B cell (primary cell): ENCODE measurements at regions of chr2 and their contacts with region 1.

Region 1: DNA sequence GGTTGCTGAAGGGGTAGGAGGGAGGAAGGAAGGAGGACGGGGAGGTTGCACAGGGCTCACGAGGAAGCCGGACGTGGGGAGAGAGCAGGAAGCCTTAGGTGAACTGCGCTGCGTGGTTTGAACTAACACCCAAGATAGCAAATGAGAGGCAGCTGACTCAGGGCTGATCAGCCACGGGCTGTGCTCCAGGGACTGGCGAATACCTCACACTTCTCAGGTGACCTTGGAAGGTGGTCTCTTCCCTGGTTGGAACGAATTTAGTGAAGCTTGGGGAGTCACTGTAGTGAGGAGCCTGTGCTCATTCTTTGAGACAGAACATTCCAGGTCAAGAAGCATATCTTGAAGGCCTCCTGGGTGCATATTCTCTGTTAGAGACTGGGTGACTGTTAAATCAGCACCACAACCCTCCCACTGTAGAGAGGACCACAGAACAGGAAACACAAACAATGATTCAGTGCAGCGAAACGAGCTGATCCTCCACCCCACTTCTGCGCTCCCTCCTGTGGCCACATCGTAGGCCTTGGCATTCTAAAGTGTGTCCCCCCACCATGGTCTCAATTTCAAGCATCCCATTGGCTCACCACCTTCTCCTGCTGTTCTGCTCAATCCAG is 33.8 kb downstream of the TOGARAM2 start:
- DNase-seq: peak; percentile 62
- ATAC-seq: peak; percentile 56
- H3K4me3 ChIP-seq: peak overlapping the region in 4 of 5 experiments; percentile 2 to 36 (median 10)
- H3K4me3 Mint-ChIP-seq: peak overlapping the region; percentile 38
- H3K27ac ChIP-seq: peak overlapping the region in 1 of 2 donors; percentile 64
- H3K27ac Mint-ChIP-seq: peak overlapping the region; percentile 80
- H3K4me1 ChIP-seq: peaks cover 31 to 53% of the 10 kb centered on the region in 2 donors
- H3K4me1 Mint-ChIP-seq: peaks cover 58% of the 10 kb centered on the region
- H3K27me3 ChIP-seq: peaks cover 0 to 22% (median 0%) of the 10 kb centered on the region in 4 experiments
- H3K27me3 Mint-ChIP-seq: peaks cover 8% of the 10 kb centered on the region
- CTCF ChIP-seq: no peak

Region 2: GRCh38 chr2:28958689-28959088 is 56.2 kb before region 1 on chr2:
- CTCF ChIA-PET with region 1: interaction called, 5 read pairs
- POLR2A ChIA-PET with region 1: no interaction called
- intact Hi-C with region 1: loop called (anchors 1 kb)
- DNase-seq: peak; percentile 63
- ATAC-seq: peak; percentile 54
- H3K4me3 ChIP-seq: no peak overlapping the region
- H3K4me3 Mint-ChIP-seq: no peak overlapping the region
- H3K27ac ChIP-seq: no peak overlapping the region
- H3K27ac Mint-ChIP-seq: no peak overlapping the region
- H3K4me1 ChIP-seq: no peaks in the 10 kb centered on the region
- H3K4me1 Mint-ChIP-seq: peaks cover 2% of the 10 kb centered on the region
- H3K27me3 ChIP-seq: peaks cover 0 to 4% (median 0%) of the 10 kb centered on the region in 4 experiments
- H3K27me3 Mint-ChIP-seq: peaks cover 4% of the 10 kb centered on the region
- CTCF ChIP-seq: peak; percentile 70

Region 3: DNA sequence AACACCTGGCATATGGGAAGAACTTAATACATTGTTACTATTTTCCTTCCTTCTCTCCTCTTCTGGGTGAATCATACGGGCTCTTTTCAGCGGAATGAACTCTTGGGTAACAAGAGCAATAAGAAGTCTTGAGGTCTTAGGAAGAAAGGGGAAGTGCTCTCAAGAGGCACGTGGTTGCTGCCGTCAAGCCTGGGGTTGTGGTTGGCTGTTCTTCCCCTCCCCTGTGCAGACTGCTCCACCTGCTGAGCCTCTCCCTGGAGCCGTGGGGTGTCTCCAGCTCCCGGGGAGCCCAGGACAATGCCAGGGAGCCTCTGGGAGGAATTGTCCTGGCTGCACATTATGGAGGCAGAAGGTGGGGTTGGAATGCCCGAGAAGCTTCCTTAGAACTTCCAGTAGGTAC is 14.4 kb before region 1 on chr2:
- CTCF ChIA-PET with region 1: interaction called, 8 read pairs
- POLR2A ChIA-PET with region 1: interaction called, 5 read pairs
- intact Hi-C with region 1: loop called (anchors 1 kb)
- DNase-seq: peak; percentile 86
- ATAC-seq: peak; percentile 96
- H3K4me3 ChIP-seq: no peak overlapping the region
- H3K4me3 Mint-ChIP-seq: peak overlapping the region; percentile 0
- H3K27ac ChIP-seq: no peak overlapping the region
- H3K27ac Mint-ChIP-seq: peak overlapping the region; percentile 0
- H3K4me1 ChIP-seq: peaks cover 7 to 13% of the 10 kb centered on the region in 2 donors
- H3K4me1 Mint-ChIP-seq: peaks cover 10% of the 10 kb centered on the region
- H3K27me3 ChIP-seq: no peaks in the 10 kb centered on the region
- H3K27me3 Mint-ChIP-seq: peaks cover 11% of the 10 kb centered on the region
- CTCF ChIP-seq: no peak

Region 4: DNA sequence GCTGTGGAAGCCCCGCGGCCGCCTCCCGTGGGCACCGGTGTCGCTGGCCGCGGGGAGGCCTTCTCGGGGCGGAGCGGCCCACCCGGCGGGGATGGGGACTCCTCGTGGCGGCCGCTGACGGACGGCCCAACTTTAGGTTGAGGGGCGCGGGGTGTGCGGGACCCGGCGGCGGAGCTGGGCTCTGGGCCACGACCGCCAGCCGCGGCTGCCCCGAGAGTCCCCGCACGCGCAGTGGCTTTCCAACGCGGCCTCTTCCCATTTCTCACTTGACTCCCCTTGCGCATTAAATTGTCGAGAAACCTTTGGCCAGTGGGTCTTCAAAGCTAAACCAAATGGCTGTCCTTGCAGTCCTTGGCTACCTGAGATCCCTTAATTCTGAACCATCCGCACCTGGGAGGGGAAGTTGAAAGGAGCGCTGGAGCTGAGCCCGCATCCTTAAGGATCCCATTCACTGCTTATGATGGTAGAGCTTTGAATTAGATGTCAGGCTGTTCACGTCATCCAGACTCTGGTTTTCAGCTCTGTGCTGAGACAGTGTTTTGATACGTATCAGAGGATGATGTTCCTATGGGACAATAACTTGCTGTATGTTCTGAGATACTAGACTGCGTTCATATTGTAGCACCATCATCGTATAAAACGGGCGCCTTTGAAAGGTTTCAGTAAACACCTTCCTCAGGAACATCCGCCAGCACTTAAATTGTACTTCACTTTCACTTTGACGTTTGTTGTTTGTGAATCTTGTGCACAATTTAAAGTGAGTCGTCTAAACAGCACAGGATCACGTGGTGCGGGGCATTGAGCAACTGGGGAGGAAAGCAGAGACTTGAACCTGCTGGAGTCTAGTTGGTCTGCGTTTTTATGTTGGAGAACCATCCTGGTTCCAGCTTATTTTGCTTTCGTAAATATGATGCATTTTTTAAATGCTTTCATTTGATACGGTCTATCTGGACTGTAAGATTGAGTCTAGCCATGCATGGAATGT is 101.2 kb after region 1 on chr2:
- CTCF ChIA-PET with region 1: no interaction called
- POLR2A ChIA-PET with region 1: no interaction called
- intact Hi-C with region 1: loop called (anchors 5 kb)
- DNase-seq: peak; percentile 56
- ATAC-seq: peak; percentile 32
- H3K4me3 ChIP-seq: peak overlapping the region; percentile 13 to 90 (median 65)
- H3K4me3 Mint-ChIP-seq: peak overlapping the region; percentile 88
- H3K27ac ChIP-seq: peak overlapping the region; percentile 58
- H3K27ac Mint-ChIP-seq: peak overlapping the region; percentile 91
- H3K4me1 ChIP-seq: peaks cover 13 to 16% of the 10 kb centered on the region in 2 donors
- H3K4me1 Mint-ChIP-seq: peaks cover 25% of the 10 kb centered on the region
- H3K27me3 ChIP-seq: peaks cover 0 to 2% (median 0%) of the 10 kb centered on the region in 4 experiments
- H3K27me3 Mint-ChIP-seq: peaks cover 6% of the 10 kb centered on the region
- CTCF ChIP-seq: no peak